PC-9 (cell line): ENCODE measurements at regions of chr3 and their contacts with region 1.

Region 1: GRCh38 chr3:183212565-183212964 is 40.5 kb upstream of the B3GNT5 start:
- DNase-seq: peak in 1 of 2 experiments; percentile 12
- H3K4me3 ChIP-seq: no peak overlapping the region
- H3K27ac ChIP-seq: no peak overlapping the region
- H3K4me1 ChIP-seq: no peaks in the 10 kb centered on the region
- H3K27me3 ChIP-seq: no peaks in the 10 kb centered on the region
- CTCF ChIP-seq: no peak

Region 2: DNA sequence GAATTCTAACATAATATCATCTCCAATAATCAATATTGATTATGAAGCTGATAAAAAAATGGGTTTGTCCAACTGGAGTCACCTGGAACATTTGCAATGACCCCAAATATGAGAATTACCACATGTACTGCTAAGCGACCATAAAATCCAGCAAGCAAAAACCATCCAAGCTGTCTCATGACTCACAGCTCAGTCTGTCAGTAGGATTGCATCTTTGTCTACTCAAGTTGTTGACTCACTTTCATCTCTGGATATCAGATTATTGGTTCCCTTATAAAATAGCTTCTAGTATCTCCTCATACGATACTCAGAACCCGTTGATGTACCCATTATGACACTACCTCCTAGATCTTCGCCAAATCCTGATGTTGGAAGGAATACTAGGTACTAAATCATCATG is 629.0 kb before region 1 on chr3:
- CTCF ChIA-PET with region 1: no interaction called
- POLR2A ChIA-PET with region 1: no interaction called
- intact Hi-C with region 1: no loop called
- DNase-seq: no peak
- H3K4me3 ChIP-seq: no peak overlapping the region
- H3K27ac ChIP-seq: no peak overlapping the region
- H3K4me1 ChIP-seq: peaks cover 6% of the 10 kb centered on the region; the same call in 1 of the 2 replicates
- H3K27me3 ChIP-seq: no peaks in the 10 kb centered on the region
- CTCF ChIP-seq: no peak

Region 3: DNA sequence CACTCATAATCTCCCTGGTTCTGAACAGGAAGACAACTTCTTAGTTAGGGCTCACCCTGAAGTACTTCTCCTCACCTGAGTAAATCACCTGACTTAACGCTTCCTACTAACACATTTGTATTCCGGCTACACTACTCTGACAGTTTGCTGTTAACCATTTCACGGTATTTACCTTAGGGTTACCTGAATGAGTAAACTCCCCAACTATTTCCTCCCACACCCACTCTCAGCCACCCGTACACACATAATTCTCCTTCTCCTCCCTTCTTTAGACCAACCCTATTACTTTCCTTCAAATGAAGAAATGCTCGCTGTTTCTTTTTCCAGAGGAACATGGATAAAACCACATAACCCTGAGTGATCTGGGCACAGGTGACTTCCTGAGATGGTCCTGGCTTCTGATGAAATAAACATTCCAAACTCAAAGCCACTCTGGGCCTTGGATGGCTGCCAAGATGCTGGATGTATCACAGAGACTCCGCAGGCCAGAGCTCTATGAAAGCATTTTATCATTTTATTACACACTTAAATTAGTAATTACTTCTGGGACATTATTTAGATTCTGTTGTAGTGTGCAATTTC is 602.9 kb before region 1 on chr3:
- CTCF ChIA-PET with region 1: no interaction called
- POLR2A ChIA-PET with region 1: no interaction called
- intact Hi-C with region 1: no loop called
- DNase-seq: peak; percentile 78 to 98
- H3K4me3 ChIP-seq: peak overlapping the region; percentile 2; the same call in 1 of the 2 replicates
- H3K27ac ChIP-seq: peak overlapping the region; percentile 80
- H3K4me1 ChIP-seq: peaks cover 39% of the 10 kb centered on the region
- H3K27me3 ChIP-seq: no peaks in the 10 kb centered on the region
- CTCF ChIP-seq: no peak

Region 4: GRCh38 chr3:182702216-182702615 is 510.3 kb before region 1 on chr3:
- CTCF ChIA-PET with region 1: interaction called, 18 read pairs
- POLR2A ChIA-PET with region 1: no interaction called
- intact Hi-C with region 1: no loop called
- DNase-seq: no peak
- H3K4me3 ChIP-seq: no peak overlapping the region
- H3K27ac ChIP-seq: no peak overlapping the region
- H3K4me1 ChIP-seq: peaks cover 7% of the 10 kb centered on the region; the same call in 1 of the 2 replicates
- H3K27me3 ChIP-seq: no peaks in the 10 kb centered on the region
- CTCF ChIP-seq: no peak

Region 5: GRCh38 chr3:183381179-183381578 is 168.6 kb after region 1 on chr3:
- CTCF ChIA-PET with region 1: no interaction called
- POLR2A ChIA-PET with region 1: no interaction called
- intact Hi-C with region 1: no loop called
- DNase-seq: peak in 1 of 2 experiments; percentile 46
- H3K4me3 ChIP-seq: no peak overlapping the region
- H3K27ac ChIP-seq: no peak overlapping the region
- H3K4me1 ChIP-seq: peaks cover 63% of the 10 kb centered on the region
- H3K27me3 ChIP-seq: no peaks in the 10 kb centered on the region
- CTCF ChIP-seq: no peak